ENCODE measurements at regions of chr11 and their contacts with region 1.

Region 1: GRCh38 chr11:236774-237767 is at the start of gene PSMD13:
- DNase-seq: peak; percentile 32 to 92
- H3K4me3 ChIP-seq: peak within 1 kb of the TSS; percentile 96 to 99
- H3K27ac ChIP-seq: peak within 1 kb of the TSS; percentile 98
- H3K4me1 ChIP-seq: peaks cover 8 to 15% of the 10 kb centered on the region in 2 donors
- H3K27me3 ChIP-seq: no peaks in the 10 kb centered on the region
- CTCF ChIP-seq: no peak
- total RNA-seq, gene PSMD13: 50.2 TPM

Region 2: DNA sequence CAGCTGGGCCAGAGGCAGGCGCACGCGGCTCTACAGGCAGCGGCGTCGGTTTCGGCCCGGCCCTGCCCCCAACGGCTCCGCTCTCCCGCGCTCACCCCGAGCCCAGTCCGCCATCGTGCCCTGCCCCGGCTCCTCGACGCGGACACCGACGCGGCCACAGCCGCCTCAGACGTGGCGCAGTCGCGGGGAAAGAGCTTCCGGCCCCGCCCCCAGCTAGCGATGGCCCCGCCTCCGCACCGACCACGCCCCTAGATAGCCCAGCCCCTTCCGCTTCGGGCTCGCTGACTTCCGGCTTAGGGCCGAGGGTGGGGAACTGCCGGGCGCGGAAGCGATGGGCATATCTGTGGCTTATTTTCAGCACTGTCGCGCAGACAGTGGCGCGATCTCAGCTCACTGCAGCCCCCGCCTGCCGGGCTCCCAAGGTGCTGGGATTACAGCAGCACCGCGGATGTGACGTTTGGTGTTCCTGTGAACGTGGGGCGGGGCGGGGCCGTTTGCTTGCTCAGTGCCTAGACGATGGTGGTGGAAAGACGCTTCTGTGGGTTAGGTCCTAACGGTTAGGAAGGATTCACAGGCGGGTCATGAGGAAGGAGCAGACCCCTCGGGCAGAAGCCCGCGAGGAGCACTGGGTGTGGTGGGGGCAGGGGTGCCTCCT is 29.7 kb before region 1 on chr11 and contains the starts of genes BET1L and RIC8A:
- intact Hi-C with region 1: loop called (anchors 1 kb)
- DNase-seq: peak; percentile 95 to 99
- H3K4me3 ChIP-seq: peak within 1 kb of the TSS; percentile 88 to 99
- H3K27ac ChIP-seq: peak within 1 kb of the TSS; percentile 99
- H3K4me1 ChIP-seq: peaks cover 17 to 47% of the 10 kb centered on the region in 2 donors
- H3K27me3 ChIP-seq: no peaks in the 10 kb centered on the region
- CTCF ChIP-seq: no peak
- total RNA-seq, gene BET1L: 42.3 TPM
- total RNA-seq, gene RIC8A: 102 TPM

Region 3: DNA sequence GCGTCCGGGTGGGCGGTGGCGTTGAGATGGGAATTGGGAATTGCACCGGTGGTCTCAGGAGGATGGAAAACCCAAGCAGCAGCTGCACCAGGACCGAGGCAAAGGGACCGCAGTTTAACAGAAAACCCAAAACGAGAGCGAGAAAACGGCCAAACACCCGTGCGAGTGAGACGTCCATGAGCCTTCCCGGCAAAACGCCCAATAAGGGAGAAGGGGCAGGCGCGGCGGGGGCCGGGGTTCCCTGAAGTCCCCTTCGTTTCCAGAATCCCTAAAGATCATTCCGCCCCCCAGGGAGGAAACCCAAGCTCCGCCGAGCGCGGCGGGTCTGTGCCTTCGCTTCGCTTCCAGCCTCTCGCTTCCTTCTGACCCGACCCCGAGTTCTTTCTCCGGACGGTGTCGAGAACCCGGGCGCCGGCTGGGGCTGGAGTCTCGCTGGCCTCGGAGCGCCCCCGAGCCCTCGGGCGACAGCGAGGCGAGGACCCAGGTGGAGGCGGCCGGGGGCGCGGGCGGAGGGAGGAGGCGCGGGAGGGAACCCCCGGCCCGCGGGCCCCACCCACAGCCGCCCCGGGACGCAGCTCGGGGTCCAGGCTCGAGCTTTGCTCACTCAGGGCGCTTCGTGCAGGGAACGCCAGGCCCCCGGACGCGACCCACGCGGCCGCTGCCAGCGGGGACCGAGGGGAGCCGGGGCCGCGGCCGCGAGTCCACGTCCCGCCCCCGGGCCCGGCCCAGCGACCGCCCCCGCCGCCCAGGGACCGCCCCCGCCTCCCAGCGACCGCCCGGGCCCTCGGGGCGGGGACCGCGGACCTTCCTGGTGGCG is 51.5 kb after region 1 on chr11 and contains the start of gene PGGHG:
- intact Hi-C with region 1: loop called (anchors 2 kb)
- DNase-seq: peak; percentile 2 to 87
- H3K4me3 ChIP-seq: peak within 1 kb of the TSS; percentile 69 to 97
- H3K27ac ChIP-seq: peak within 1 kb of the TSS; percentile 57 to 59
- H3K4me1 ChIP-seq: peaks cover 8 to 14% of the 10 kb centered on the region in 2 donors
- H3K27me3 ChIP-seq: peaks cover 4% of the 10 kb centered on the region
- CTCF ChIP-seq: no peak
- total RNA-seq, gene PGGHG: 155 TPM

Region 4: DNA sequence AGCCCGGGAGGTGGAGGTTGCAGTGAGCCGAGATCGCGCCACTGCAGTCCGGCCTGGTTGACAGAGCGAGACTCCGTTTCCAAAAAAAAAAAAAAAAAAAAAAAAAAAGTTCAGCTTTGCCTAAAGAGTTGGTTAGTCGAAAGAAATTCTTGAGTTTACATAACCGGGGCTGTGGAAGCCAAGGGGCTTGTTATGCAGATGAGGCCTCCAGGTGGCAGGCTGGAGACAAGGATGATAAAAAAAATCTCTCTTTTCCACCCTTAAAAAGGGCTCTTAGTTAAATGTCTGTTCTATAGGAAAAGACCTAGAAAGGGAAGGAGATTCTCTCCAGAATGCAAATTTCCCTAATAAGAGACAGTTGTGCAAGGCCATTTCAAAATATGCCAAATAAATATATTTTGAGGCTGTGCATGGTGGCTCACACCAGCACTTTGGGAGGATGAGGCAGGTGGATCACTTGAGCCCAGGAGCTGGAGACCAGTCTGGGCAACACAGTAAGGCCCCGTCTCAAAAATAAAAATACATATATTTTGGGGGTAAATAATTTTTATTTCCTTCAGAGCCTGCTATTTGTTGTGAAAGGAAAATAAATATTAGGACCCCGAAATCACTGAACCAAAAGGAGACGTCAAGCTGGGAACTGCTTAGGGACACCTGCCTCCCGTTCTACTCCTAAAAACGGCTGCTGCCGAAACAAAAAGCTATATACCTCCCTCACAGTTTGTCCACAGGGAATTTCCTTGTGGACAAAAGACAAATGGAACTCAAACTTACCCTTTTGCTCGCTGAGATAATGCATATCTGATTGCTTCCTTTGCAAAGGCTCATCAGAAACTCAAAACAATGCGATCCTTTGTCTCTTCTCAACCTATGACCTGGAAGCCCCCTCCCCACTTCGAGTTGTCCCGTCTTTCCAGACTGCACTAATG is 68.1 kb after region 1 on chr11:
- intact Hi-C with region 1: loop called (anchors 5 kb)
- DNase-seq: peak in 1 of 2 donors; percentile 85
- H3K4me3 ChIP-seq: no peak overlapping the region
- H3K27ac ChIP-seq: peak overlapping the region in 1 of 2 donors; percentile 86
- H3K4me1 ChIP-seq: peaks cover 7 to 35% of the 10 kb centered on the region in 2 donors
- H3K27me3 ChIP-seq: no peaks in the 10 kb centered on the region
- CTCF ChIP-seq: peak; percentile 58 to 65 (median 64)

Region 5: DNA sequence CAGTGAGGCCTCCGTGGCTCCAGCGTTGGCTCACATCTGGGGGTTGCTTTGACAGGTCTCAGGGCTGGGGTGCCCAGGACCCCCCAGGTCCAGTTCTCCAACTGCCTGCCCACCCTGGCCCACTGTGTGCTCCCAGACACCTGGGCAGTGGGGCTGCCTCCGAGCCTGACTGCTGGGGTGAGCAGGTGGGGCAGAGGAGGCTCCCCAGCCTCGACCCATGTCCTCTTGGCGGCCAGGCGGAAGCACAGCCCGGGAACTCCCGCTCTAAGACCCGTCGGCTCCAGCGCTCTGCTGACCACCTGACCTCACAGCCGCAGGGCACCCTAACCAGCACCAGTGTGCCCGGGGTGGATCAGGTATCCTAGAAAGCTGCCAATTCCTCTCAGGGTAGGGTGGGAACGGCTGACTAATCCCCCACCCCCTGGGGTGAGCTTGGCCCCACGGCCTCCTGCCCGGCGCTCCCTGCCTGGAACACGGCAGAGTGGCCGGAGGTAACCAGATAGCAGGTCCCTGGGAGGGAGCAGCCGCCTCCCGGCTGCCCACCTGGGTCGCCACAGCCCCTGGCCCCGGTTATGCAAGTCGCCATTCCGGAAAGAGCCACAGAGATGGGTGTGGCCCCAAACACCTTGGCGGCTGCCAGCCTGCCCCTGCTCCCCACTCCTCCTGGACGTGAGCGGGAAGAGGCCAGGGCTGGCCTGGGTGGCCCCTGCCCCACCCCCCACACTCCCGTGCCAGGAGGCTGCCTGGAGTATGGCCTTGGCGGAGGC is 966.6 kb after region 1 on chr11:
- intact Hi-C with region 1: no loop called
- DNase-seq: peak in 1 of 2 donors; percentile 63
- H3K4me3 ChIP-seq: no peak overlapping the region
- H3K27ac ChIP-seq: no peak overlapping the region
- H3K4me1 ChIP-seq: no peaks in the 10 kb centered on the region
- H3K27me3 ChIP-seq: no peaks in the 10 kb centered on the region
- CTCF ChIP-seq: no peak